PC-9 (cell line): ENCODE measurements at regions of chr7 and their contacts with region 1.

Region 1: DNA sequence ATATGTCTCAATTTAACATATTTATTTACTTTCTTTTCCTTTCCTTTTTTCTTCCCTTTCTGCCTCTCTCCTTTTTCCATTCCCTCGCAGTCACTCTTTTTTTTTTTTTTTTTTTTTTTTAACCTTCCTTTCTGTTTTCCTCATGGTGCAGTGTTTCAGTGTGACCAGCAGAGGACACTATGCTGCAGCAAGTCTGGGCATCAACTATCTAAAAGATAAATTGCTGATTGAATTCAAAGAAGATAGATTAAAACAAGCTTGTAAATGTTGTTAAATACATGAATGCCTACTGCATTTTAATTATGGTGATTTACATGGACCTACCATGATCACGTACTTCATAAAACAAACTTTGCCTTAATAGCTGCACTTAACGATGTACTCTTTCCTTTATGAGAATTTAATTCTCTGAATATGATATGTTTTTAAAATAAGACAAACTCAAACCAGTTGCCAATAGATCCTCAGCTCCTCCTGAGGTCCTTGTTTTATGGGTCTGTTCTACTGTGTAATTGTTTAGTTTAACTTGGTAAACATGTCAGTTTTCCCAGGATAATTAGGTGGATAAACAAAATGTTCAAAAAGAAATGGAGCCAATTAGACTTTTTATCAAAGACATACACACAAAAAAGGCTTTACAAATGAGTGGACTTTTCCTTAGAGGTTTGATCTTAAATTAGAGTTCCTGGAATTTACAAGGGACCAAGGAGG is 101.0 kb upstream of the AGR3 start:
- DNase-seq: peak; percentile 31 to 66
- H3K4me3 ChIP-seq: no peak overlapping the region
- H3K27ac ChIP-seq: peak overlapping the region; percentile 5; the same call in 1 of the 2 replicates
- H3K4me1 ChIP-seq: peaks cover 61% of the 10 kb centered on the region
- H3K27me3 ChIP-seq: no peaks in the 10 kb centered on the region
- CTCF ChIP-seq: peak; percentile 99

Region 2: DNA sequence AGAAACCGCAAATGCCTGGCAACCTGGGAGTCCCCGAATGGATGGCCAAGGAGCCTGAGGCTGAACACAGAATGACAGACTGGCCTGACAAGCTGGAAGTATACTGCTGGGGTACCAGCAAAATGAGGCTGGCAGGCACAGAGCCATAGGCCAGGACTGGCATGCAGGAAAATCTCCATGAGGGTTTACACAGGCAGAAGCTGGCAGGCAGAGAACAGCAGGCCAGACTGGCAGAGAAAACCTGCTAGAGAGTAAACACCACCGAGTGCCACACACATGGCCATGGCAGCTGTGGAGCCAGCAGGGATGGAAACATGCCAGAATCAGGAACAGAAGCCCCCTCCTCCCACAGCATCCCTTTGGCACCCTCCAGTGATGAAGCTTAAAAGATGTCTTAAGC is 624.9 kb before region 1 on chr7:
- CTCF ChIA-PET with region 1: no interaction called
- POLR2A ChIA-PET with region 1: no interaction called
- intact Hi-C with region 1: no loop called
- DNase-seq: no peak
- H3K4me3 ChIP-seq: no peak overlapping the region
- H3K27ac ChIP-seq: no peak overlapping the region
- H3K4me1 ChIP-seq: no peaks in the 10 kb centered on the region
- H3K27me3 ChIP-seq: no peaks in the 10 kb centered on the region
- CTCF ChIP-seq: no peak

Region 3: DNA sequence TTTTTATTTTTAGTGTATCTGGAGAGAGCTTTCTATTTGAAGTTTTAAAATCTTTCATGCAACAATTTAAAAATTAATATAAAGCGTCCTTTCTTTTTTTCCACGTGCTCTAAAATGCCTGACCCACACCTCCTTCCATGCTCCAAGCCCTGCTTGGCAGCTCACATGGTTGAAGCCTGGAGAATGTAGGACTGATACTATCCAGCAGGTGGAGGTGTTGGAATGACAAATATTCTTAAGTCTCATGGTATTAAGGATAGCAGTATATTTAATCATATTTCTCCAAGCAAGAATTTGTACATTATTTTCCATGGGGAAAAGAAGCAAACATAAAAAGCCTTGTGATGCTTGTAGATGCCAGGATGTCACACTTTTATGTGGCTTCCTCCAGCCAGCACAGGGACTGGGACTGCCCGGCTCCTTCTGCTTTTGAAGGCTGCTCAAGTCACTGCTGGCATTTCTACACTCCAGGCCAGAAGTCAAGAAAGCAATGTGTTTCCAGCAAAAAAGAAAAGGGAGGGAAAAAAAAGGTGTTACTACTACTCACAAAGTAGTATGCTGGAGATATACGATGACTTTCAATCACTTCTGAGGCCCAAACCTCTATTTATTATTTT is 287.1 kb before region 1 on chr7:
- CTCF ChIA-PET with region 1: no interaction called
- POLR2A ChIA-PET with region 1: no interaction called
- intact Hi-C with region 1: loop called (anchors 5 kb)
- DNase-seq: peak; percentile 37 to 63
- H3K4me3 ChIP-seq: no peak overlapping the region
- H3K27ac ChIP-seq: no peak overlapping the region
- H3K4me1 ChIP-seq: no peaks in the 10 kb centered on the region
- H3K27me3 ChIP-seq: no peaks in the 10 kb centered on the region
- CTCF ChIP-seq: peak; percentile 89

Region 4: GRCh38 chr7:16891338-16891737 is 91.5 kb before region 1 on chr7:
- CTCF ChIA-PET with region 1: interaction called, 5 read pairs
- POLR2A ChIA-PET with region 1: no interaction called
- intact Hi-C with region 1: loop called (anchors 1 kb)
- DNase-seq: peak; percentile 44 to 73
- H3K4me3 ChIP-seq: no peak overlapping the region
- H3K27ac ChIP-seq: no peak overlapping the region
- H3K4me1 ChIP-seq: peaks cover 15% of the 10 kb centered on the region
- H3K27me3 ChIP-seq: no peaks in the 10 kb centered on the region
- CTCF ChIP-seq: peak; percentile 84

Region 5: GRCh38 chr7:16933296-16934279 is 49.2 kb before region 1 on chr7:
- CTCF ChIA-PET with region 1: no interaction called
- POLR2A ChIA-PET with region 1: interaction called, 3 read pairs
- intact Hi-C with region 1: loop called (anchors 2 kb)
- DNase-seq: no peak
- H3K4me3 ChIP-seq: no peak overlapping the region
- H3K27ac ChIP-seq: no peak overlapping the region
- H3K4me1 ChIP-seq: peaks cover 14% of the 10 kb centered on the region
- H3K27me3 ChIP-seq: no peaks in the 10 kb centered on the region
- CTCF ChIP-seq: no peak

Region 6: GRCh38 chr7:17370092-17370491 is 387.3 kb after region 1 on chr7:
- CTCF ChIA-PET with region 1: no interaction called
- POLR2A ChIA-PET with region 1: no interaction called
- intact Hi-C with region 1: loop called (anchors 2 kb)
- DNase-seq: peak; percentile 56 to 76
- H3K4me3 ChIP-seq: no peak overlapping the region
- H3K27ac ChIP-seq: peak overlapping the region; percentile 94
- H3K4me1 ChIP-seq: peaks cover 51% of the 10 kb centered on the region
- H3K27me3 ChIP-seq: no peaks in the 10 kb centered on the region
- CTCF ChIP-seq: no peak

Region 7: GRCh38 chr7:17422966-17423365 is 440.2 kb after region 1 on chr7:
- CTCF ChIA-PET with region 1: no interaction called
- POLR2A ChIA-PET with region 1: no interaction called
- intact Hi-C with region 1: no loop called
- DNase-seq: no peak
- H3K4me3 ChIP-seq: no peak overlapping the region
- H3K27ac ChIP-seq: no peak overlapping the region
- H3K4me1 ChIP-seq: no peaks in the 10 kb centered on the region
- H3K27me3 ChIP-seq: no peaks in the 10 kb centered on the region
- CTCF ChIP-seq: no peak

Region 8: DNA sequence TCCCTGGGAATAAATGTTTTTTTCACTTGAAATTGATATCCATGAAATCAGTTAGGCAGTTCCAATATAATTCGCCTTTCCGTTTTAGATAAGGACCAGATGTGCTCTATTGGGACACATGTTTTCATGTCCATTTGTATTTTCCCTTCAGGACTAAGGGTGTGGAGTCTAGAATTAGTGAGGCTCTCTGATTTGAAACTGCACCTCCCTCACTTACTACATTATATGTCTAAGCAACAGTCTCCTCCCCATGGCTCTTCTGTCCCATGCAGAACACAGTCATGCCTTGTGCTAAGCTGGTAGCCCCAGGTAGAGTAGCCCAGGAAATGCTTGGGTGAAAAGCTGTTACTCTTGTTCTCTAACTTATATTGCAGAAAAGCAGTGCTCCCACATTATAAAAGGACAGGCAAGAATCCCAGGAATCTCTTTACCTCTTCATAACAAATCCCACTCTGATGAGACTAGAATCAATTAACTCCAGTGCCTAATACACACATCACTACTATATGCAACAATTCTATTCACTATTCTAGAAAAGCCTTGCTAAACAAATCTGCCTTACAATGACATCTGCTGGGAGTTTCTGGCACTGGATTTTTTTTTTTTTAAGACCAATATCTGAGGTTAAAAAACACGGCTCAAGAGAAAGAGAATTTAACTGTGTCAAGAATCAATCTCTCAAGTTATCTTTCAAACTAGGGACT is 663.6 kb after region 1 on chr7:
- CTCF ChIA-PET with region 1: interaction called, 6 read pairs
- POLR2A ChIA-PET with region 1: no interaction called
- intact Hi-C with region 1: loop called (anchors 1 kb)
- DNase-seq: peak; percentile 4 to 43
- H3K4me3 ChIP-seq: no peak overlapping the region
- H3K27ac ChIP-seq: no peak overlapping the region
- H3K4me1 ChIP-seq: no peaks in the 10 kb centered on the region
- H3K27me3 ChIP-seq: no peaks in the 10 kb centered on the region
- CTCF ChIP-seq: peak; percentile 71